GM13976 (cell line): ENCODE measurements at regions of chr2 and their contacts with region 1.

Region 1: GRCh38 chr2:178796079-178796677 is 11.0 kb downstream of the TTN start:
- DNase-seq: peak; percentile 55
- CTCF ChIP-seq: no peak

Region 2: DNA sequence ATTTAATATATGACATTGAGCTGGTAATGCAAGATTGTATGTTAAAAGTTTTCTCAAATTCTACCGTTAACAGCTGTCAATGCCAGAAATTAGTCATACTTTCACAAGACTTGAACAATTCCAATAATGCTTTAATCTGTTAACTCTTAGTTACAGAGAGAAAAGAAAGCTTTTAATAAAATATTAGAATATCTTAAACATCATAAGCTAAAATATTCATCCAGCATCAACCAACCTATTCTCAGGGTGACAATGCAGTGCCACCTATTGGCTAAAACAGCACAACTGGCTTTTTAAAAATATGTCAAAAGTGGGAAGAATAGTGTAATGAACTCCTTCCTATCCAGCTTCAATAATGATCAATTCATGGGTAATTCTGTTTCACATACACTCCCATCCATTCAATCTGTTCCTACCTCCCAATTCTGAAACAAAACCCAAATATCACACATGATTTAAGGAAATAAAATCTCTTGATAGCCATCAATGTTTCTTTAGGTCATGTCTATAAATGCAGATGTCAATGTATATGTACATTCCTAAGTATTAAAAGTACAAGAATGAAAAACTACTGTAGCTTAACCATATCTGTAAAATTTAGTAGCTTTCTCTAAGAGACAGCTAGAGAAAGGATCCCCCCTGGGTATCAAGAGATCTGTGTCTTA is 333.5 kb after region 1 on chr2:
- in situ Hi-C with region 1: loop called (anchors 25 kb)
- DNase-seq: peak; percentile 28
- CTCF ChIP-seq: peak; percentile 76

Region 3: DNA sequence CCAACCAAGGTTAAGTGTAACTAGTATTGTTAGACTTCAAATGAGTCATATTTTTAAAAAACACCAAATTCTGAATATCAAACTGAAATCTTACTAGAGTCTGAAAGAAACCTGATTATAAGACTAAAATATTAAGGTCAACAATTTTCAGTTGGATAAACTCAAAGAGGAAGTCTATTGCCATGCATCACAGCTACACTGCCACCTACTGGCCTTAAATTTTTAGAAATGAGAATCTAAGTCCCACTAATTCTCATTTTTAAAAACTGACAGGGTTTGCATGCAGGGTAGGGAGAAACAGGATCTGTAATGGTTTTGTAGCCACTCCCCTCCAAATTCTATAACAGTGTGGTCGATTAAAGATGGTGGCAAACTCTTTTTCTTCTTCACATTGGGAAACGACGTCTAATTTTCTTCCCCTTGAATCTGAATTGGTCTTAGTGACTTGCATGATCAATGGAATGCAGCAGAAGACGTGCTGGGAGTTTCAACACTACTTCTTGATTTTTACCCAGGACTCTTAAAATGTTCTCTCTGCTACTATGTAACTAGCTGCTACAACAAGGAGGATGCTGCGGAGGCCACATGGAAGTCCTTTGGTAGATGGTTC is 644.6 kb after region 1 on chr2:
- in situ Hi-C with region 1: loop called (anchors 25 kb)
- DNase-seq: peak; percentile 38
- CTCF ChIP-seq: peak; percentile 49

Region 4: GRCh38 chr2:179751163-179751809 is 955.1 kb after region 1 on chr2:
- in situ Hi-C with region 1: loop called (anchors 25 kb)
- DNase-seq: peak; percentile 36
- CTCF ChIP-seq: no peak